PC-9 (cell line): ENCODE measurements at regions of chr2 and their contacts with region 1.

Region 1: DNA sequence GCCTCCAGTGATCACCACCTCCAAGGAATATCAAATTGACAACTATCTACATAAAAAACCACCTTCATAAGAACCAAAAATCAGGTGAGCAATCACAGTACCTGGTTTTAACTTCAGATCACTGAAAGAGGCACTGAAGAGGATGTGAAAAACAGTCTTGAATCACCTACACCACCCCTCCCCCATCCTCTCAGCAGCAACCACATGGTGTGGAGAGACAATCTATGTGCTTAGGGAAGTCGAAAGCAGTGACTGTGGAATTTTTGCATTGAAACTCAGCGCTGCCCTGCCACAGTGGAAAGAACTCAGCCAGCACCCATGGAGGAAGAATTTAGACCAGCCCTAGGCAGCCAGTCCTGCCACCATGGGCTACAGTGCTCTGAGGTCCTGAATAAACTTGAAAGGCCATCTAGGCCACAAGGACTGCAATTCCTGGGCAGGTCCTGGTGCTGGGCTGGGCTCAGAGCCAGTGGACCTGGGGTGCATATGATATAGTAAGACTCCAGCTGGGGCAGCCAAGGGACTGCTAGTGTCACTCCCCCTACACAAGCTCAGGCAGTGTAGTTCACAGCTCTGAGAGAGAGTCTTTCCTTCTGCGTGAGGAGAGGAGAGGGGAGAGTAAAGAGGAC is 75.6 kb downstream of the ATL2 start:
- DNase-seq: no peak
- H3K4me3 ChIP-seq: no peak overlapping the region
- H3K27ac ChIP-seq: no peak overlapping the region
- H3K4me1 ChIP-seq: no peaks in the 10 kb centered on the region
- H3K27me3 ChIP-seq: no peaks in the 10 kb centered on the region
- CTCF ChIP-seq: no peak

Region 2: GRCh38 chr2:38344813-38345212 is 43.4 kb after region 1 on chr2:
- CTCF ChIA-PET with region 1: interaction called, 12 read pairs
- POLR2A ChIA-PET with region 1: no interaction called
- intact Hi-C with region 1: no loop called
- DNase-seq: no peak
- H3K4me3 ChIP-seq: no peak overlapping the region
- H3K27ac ChIP-seq: no peak overlapping the region
- H3K4me1 ChIP-seq: no peaks in the 10 kb centered on the region
- H3K27me3 ChIP-seq: no peaks in the 10 kb centered on the region
- CTCF ChIP-seq: no peak

Region 3: DNA sequence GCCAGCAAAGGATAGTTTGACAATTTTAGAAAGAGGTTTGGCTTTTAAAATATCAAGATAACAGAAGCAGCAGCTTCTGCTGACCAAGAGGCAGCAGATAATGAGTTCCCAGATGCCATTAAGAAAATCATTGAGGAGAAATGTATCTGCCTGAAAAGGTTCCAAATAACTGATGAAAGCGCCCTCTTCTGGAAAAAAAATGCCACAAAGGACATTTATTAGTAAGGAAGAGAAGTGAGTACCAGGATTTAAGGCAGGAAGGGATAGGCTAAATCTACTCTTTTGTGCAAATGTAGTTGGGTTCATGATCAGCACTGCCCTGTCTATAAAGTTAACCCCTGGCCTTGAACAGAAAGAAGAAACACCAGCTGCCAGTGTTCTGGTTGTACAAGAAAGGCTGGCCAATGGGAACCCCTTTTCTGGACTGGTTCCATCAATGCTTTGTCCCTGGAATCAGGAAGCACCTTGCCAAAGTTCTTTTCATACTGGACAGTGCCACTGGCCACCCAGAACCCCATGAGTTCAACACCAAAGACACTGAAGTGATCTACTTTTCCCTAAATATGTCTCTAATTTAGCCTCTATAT is 533.7 kb after region 1 on chr2:
- CTCF ChIA-PET with region 1: interaction called, 10 read pairs
- POLR2A ChIA-PET with region 1: no interaction called
- intact Hi-C with region 1: no loop called
- DNase-seq: no peak
- H3K4me3 ChIP-seq: no peak overlapping the region
- H3K27ac ChIP-seq: no peak overlapping the region
- H3K4me1 ChIP-seq: no peaks in the 10 kb centered on the region
- H3K27me3 ChIP-seq: no peaks in the 10 kb centered on the region
- CTCF ChIP-seq: peak; percentile 50; the same call in 1 of the 2 replicates